ENCODE measurements at regions of chr6 and their contacts with region 1.

Region 1: GRCh38 chr6:138109042-138109997 is 2.1 kb upstream of the PERP start:
- DNase-seq: peak; percentile 78
- H3K4me3 Mint-ChIP-seq: no peak overlapping the region
- H3K27ac Mint-ChIP-seq: peak overlapping the region; percentile 50
- H3K4me1 Mint-ChIP-seq: peaks cover 14% of the 10 kb centered on the region
- H3K27me3 Mint-ChIP-seq: peaks cover 2% of the 10 kb centered on the region
- CTCF ChIP-seq: peak; percentile 80

Region 2: GRCh38 chr6:137866914-137867684 is 242.2 kb before region 1 on chr6 and contains the start of gene TNFAIP3:
- CTCF ChIA-PET with region 1: interaction called, 6 read pairs
- POLR2A ChIA-PET with region 1: interaction called, 59 read pairs
- intact Hi-C with region 1: loop called (anchors 5 kb)
- DNase-seq: peak; percentile 96
- H3K4me3 Mint-ChIP-seq: peak within 1 kb of the TSS; percentile 72
- H3K27ac Mint-ChIP-seq: peak within 1 kb of the TSS; percentile 89
- H3K4me1 Mint-ChIP-seq: peaks cover 17% of the 10 kb centered on the region
- H3K27me3 Mint-ChIP-seq: no peaks in the 10 kb centered on the region
- CTCF ChIP-seq: peak; percentile 74
- total RNA-seq, gene TNFAIP3: 38.2 and 52.8 TPM in 2 replicates

Region 3: DNA sequence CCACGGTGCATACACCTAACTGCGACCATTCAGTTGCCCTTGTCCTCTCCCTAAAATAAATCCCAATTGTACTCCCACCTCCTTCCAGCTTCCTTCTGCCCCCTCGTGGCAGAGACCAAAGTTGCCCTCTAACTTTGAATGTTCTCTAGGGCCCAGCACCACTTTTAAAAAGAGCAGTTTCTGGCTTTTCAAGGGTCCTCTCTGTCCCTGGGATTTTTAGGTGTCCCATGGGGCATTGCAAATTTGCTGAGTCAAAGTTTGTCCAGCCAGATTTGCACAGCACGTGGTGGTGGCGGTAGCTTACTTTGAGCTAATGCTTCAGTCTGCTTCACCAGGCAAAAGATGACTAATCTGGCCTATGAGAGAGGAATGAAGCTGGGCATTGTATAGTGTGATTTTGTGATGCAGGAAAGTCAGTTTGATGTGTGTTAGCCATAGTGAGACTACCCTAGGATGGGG is 102.3 kb before region 1 on chr6:
- CTCF ChIA-PET with region 1: interaction called, 127 read pairs
- POLR2A ChIA-PET with region 1: interaction called, 386 read pairs
- intact Hi-C with region 1: loop called (anchors 1 kb)
- DNase-seq: peak; percentile 69
- H3K4me3 Mint-ChIP-seq: no peak overlapping the region
- H3K27ac Mint-ChIP-seq: peak overlapping the region; percentile 47
- H3K4me1 Mint-ChIP-seq: peaks cover 17% of the 10 kb centered on the region
- H3K27me3 Mint-ChIP-seq: no peaks in the 10 kb centered on the region
- CTCF ChIP-seq: peak; percentile 49

Region 4: DNA sequence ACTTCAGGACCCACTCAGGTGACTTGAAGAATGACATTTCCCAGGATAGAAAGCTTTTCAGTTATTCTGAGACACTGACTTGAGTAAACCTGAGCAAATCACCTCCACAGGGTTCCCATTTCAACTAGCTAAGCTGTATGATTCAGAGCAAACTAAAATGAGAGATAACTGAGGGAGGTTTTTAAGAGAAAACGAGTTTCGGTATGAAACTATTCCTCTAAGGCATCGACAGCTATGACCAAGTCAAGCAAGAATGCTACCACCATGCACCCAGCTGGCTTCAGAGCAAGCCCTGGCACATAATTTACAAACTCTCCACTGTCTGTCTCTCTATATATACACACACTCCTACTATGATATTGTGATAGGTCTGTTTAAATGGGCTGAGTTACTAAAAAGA is 77.5 kb before region 1 on chr6:
- CTCF ChIA-PET with region 1: interaction called, 26 read pairs
- POLR2A ChIA-PET with region 1: interaction called, 717 read pairs
- intact Hi-C with region 1: loop called (anchors 2 kb)
- DNase-seq: peak; percentile 62
- H3K4me3 Mint-ChIP-seq: peak overlapping the region; percentile 55
- H3K27ac Mint-ChIP-seq: peak overlapping the region; percentile 91
- H3K4me1 Mint-ChIP-seq: peaks cover 62% of the 10 kb centered on the region
- H3K27me3 Mint-ChIP-seq: no peaks in the 10 kb centered on the region
- CTCF ChIP-seq: no peak

Region 5: GRCh38 chr6:138410972-138411667 is 301.8 kb after region 1 on chr6:
- CTCF ChIA-PET with region 1: interaction called, 5 read pairs
- POLR2A ChIA-PET with region 1: interaction called, 21 read pairs
- intact Hi-C with region 1: no loop called
- DNase-seq: peak; percentile 89
- H3K4me3 Mint-ChIP-seq: peak overlapping the region; percentile 7
- H3K27ac Mint-ChIP-seq: peak overlapping the region; percentile 29
- H3K4me1 Mint-ChIP-seq: peaks cover 37% of the 10 kb centered on the region
- H3K27me3 Mint-ChIP-seq: no peaks in the 10 kb centered on the region
- CTCF ChIP-seq: no peak

Region 6: DNA sequence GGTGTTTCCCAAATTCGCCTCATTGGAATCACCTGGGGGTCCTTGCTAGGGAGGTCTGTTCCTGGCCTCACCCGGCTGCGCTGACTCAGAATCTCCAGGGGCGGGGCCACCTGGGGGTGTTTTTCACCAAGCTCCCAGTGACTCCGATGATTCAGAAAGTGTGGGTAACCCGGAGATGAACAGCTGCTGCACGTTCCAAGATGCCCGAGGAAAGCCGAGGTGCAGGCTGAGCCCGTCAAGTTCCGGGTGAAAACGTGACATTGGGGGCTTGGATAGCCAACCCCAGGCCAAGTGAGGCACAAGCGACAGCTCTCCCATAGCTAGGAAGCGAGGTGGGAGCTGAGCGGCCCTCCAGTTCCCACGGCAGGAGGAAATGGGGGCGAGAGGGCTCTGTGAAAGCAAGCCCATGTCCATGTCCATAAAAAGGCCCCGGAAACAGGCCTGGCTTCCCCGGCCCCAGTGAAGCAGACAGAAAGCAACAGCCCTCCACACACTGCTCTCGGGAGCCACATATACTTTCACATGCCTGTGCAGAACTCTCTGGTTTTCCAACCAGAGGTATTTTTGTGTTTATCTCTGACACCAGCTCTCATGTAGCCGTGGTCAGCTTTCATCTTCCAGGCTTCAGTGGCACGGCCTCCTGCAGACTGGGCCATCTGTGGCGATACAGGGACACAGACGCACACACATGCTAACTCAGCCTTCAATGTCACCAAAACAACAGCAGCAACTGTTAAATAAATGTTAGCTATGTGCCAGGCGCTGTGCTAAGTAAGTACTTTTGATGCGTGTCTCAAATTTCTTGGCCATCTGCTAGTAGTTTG is 573.6 kb after region 1 on chr6:
- CTCF ChIA-PET with region 1: no interaction called
- POLR2A ChIA-PET with region 1: interaction called, 11 read pairs
- intact Hi-C with region 1: no loop called
- DNase-seq: peak; percentile 86
- H3K4me3 Mint-ChIP-seq: peak overlapping the region; percentile 72
- H3K27ac Mint-ChIP-seq: peak overlapping the region; percentile 98
- H3K4me1 Mint-ChIP-seq: peaks cover 5% of the 10 kb centered on the region
- H3K27me3 Mint-ChIP-seq: no peaks in the 10 kb centered on the region
- CTCF ChIP-seq: no peak

Measured in MCF 10A (cell line).